Pancreas (tissue), 10 donors: ENCODE measurements at regions of chr21 and their contacts with region 1.

Region 1: GRCh38 chr21:38733973-38734546 is 71.7 kb upstream of the ETS2 start:
- DNase-seq: peak; percentile 47 to 99 (median 84)
- ATAC-seq: peak; percentile 66 to 98 (median 95)
- H3K4me3 ChIP-seq: peak overlapping the region in 1 of 4 donors; percentile 8
- H3K27ac ChIP-seq: peak overlapping the region in 2 of 4 donors; percentile 25 to 27
- H3K4me1 ChIP-seq: no peaks in the 10 kb centered on the region
- H3K27me3 ChIP-seq: peaks cover 0 to 6% (median 0%) of the 10 kb centered on the region in 4 donors
- CTCF ChIP-seq: peak; percentile 83 to 94 (median 86)

Region 2: DNA sequence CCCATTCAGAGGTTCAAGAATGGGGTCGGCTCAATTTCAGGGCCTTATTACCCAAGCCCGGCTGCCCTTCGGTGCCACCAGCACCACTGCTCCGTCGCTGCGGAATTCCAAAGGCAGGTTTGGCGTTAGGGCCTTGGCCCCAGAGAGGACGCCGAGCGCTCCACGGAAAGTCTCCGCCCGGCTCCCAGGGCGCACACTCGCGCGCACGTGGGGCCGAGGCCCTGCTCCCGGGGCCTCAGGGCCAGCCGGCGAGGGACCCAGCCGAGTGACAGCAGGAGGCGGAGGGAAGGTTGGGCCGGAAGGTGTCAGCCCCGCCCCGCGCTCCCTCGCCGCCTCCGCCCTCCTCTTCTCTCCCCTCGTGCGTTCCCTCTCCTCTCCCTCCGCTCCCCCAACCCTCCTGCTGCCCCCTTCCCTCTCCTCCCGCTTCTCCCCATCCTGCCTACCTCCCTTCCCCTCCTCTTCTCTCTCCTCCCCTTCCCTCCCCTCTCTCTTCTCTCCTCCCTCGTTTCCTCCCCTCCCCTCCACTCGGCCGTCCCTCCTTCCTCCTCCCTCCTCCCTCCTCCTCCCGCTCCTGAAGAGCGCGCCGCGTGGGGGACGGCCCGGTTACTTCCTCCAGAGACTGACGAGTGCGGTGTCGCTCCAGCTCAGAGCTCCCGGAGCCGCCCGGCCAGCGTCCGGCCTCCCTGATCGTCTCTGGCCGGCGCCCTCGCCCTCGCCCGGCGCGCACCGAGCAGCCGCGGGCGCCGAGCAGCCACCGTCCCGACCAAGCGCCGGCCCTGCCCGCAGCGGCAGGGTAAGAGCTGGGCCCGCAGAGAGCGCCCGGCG is 71.5 kb after region 1 on chr21 and contains the start of gene ETS2:
- intact Hi-C with region 1: loop called in 1 of 3 experiments (anchors 10 kb)
- DNase-seq: peak; percentile 87 to 94 (median 91)
- ATAC-seq: peak; percentile 87 to 93 (median 89)
- H3K4me3 ChIP-seq: peak within 1 kb of the TSS; percentile 66 to 87 (median 76)
- H3K27ac ChIP-seq: peak within 1 kb of the TSS; percentile 56 to 90 (median 87)
- H3K4me1 ChIP-seq: no peaks in the 10 kb centered on the region
- H3K27me3 ChIP-seq: no peaks in the 10 kb centered on the region
- CTCF ChIP-seq: peak in 1 of 4 donors; percentile 3
- total RNA-seq, gene ETS2: 11.6 to 30.0 (median 17.9) TPM

Region 3: GRCh38 chr21:39120876-39121599 is 387.0 kb after region 1 on chr21:
- intact Hi-C with region 1: loop called in 1 of 3 experiments (anchors 5 kb)
- DNase-seq: no peak
- ATAC-seq: no peak
- H3K4me3 ChIP-seq: no peak overlapping the region
- H3K27ac ChIP-seq: no peak overlapping the region
- H3K4me1 ChIP-seq: no peaks in the 10 kb centered on the region
- H3K27me3 ChIP-seq: no peaks in the 10 kb centered on the region
- CTCF ChIP-seq: no peak